ENCODE measurements at regions of chr4 and their contacts with region 1.

Region 1: GRCh38 chr4:158914218-158914617 is 145.4 kb downstream of the FNIP2 start:
- DNase-seq: no peak
- ATAC-seq: peak; percentile 48

Region 2: GRCh38 chr4:159010563-159011260 is 96.5 kb after region 1 on chr4:
- intact Hi-C with region 1: loop called (anchors 5 kb)
- DNase-seq: no peak
- ATAC-seq: peak; percentile 91

Measured in Right ventricle myocardium inferior (tissue), 1 donor.